Panc1 (cell line): ENCODE measurements at regions of chr7 and their contacts with region 1.

Region 1: GRCh38 chr7:37234928-37235327 is 213.7 kb downstream of the ELMO1 start:
- DNase-seq: no peak
- ATAC-seq: peak; percentile 74; the same call in 1 of the 2 replicates
- H3K4me3 ChIP-seq: no peak overlapping the region
- H3K27ac ChIP-seq: no peak overlapping the region
- H3K4me1 ChIP-seq: no peaks in the 10 kb centered on the region
- H3K27me3 ChIP-seq: peaks cover 41% of the 10 kb centered on the region
- CTCF ChIP-seq: peak; percentile 81; the same call in 1 of the 2 replicates

Region 2: DNA sequence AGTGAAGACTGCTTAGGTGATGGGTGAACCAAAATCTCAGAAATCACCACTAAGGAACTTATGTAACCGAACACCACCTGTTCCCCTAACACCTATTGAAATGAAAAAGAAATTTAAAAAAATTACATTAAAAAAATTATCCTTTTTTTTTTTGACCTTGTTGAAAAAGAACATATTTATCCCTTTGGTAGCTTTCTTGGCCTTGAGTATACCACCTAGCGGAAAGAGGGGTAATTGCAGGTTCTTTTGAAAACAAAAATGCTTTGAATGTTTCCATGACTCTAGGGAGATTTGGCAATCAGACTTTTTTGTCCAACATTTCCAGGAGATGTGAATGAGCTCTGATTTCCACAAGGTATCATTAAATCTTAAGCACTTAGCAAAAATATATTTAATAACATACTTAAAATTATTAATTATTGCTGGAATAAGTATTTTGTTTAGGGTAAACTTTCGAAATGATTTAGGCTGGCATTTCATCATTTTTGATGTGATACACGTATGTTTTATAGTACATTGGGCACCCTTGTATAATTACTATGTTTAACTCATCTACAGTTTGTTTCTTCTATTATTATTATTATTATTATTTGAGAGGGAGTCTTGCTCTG is 260.8 kb after region 1 on chr7:
- CTCF ChIA-PET with region 1: interaction called, 5 read pairs
- POLR2A ChIA-PET with region 1: no interaction called
- in situ Hi-C with region 1: no loop called
- intact Hi-C with region 1: loop called (anchors 5 kb)
- DNase-seq: peak; percentile 12
- ATAC-seq: no peak
- H3K4me3 ChIP-seq: no peak overlapping the region
- H3K27ac ChIP-seq: no peak overlapping the region
- H3K4me1 ChIP-seq: no peaks in the 10 kb centered on the region
- H3K27me3 ChIP-seq: peaks cover 2% of the 10 kb centered on the region; the same call in 1 of the 2 replicates
- CTCF ChIP-seq: peak; percentile 85

Region 3: GRCh38 chr7:37510043-37510634 is 275.2 kb after region 1 on chr7:
- CTCF ChIA-PET with region 1: no interaction called
- POLR2A ChIA-PET with region 1: no interaction called
- in situ Hi-C with region 1: no loop called
- intact Hi-C with region 1: loop called (anchors 1 kb)
- DNase-seq: peak; percentile 22
- ATAC-seq: no peak
- H3K4me3 ChIP-seq: no peak overlapping the region
- H3K27ac ChIP-seq: no peak overlapping the region
- H3K4me1 ChIP-seq: no peaks in the 10 kb centered on the region
- H3K27me3 ChIP-seq: no peaks in the 10 kb centered on the region; the same call in none of the 2 replicates
- CTCF ChIP-seq: peak; percentile 77; the same call in 1 of the 2 replicates

Region 4: DNA sequence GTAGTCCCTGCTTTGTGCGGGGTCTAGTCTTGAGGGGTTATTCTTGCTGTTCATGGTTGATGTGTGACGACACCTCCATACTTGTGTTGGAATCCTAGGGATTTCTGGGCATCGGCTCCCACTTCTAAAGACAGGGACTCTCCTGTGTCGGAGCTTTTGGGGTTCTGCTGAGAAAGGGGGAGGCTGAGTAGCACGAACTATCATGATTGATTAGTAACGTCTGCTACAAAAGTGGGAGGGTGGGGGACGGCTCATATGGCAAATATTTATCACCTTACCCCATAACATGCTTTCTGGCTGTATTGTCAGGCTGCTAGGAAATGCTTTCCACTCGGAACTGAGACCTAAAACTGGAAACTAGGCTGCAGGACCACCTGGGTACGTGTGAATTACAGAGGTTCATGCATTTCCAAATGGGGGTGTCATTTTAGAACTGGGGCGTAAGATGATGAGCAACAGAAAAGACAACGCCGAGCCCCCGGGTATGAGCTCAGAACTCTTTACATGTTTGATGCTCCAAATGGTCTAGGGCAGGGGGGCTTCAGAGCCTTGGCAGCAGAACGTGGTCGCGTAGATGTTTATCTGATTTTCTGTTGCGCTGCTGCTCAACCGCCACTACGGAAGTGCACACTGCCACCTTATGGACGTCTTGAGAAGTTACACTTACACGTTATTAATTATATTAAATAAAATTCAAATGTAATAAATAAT is 598.3 kb after region 1 on chr7:
- CTCF ChIA-PET with region 1: interaction called, 4 read pairs
- POLR2A ChIA-PET with region 1: no interaction called
- in situ Hi-C with region 1: no loop called
- intact Hi-C with region 1: loop called (anchors 5 kb)
- DNase-seq: no peak
- ATAC-seq: no peak
- H3K4me3 ChIP-seq: peak overlapping the region in 1 of 2 experiments; percentile 37; a peak in 2 of 4 replicates
- H3K27ac ChIP-seq: no peak overlapping the region
- H3K4me1 ChIP-seq: peaks cover 4% of the 10 kb centered on the region; the same call in 1 of the 2 replicates
- H3K27me3 ChIP-seq: no peaks in the 10 kb centered on the region; the same call in none of the 2 replicates
- CTCF ChIP-seq: peak; percentile 89